Posterior cingulate gyrus (tissue), 11 donors: ENCODE measurements at regions of chr9 and their contacts with region 1.

Region 1: DNA sequence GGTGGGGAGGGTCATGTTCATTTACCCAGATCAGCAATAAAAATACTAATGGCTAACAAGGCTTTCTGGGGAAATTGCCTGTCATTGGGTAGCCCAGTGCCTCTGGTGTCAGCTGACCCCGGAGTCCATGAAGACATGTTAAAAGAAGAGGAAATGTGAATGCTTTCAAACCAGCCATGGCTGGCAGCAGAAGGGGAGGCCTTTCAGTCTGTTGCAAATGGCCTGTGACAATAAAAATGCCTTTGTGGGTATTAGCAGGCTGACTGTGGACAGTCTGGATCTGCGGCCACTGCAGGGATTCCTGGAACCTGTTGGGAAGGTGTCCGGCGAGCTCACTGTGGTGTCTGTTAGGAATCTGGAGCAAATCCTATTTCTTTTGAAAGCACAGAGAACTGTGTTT is 7.5 kb downstream of the ABL1 start:
- DNase-seq: peak in 1 of 10 donors; percentile 83

Region 2: GRCh38 chr9:131277910-131278701 is 435.6 kb after region 1 on chr9:
- intact Hi-C with region 1: loop called (anchors 5 kb)
- DNase-seq: peak; percentile 75 to 97 (median 86)